ENCODE measurements at regions of chr5 and their contacts with region 1.

Region 1: GRCh38 chr5:111246459-111246858 is 22.3 kb downstream of the CAMK4 start:
- DNase-seq: no peak
- ATAC-seq: no peak
- H3K4me3 ChIP-seq: no peak overlapping the region
- H3K4me3 Mint-ChIP-seq: peak overlapping the region; percentile 3 to 46 (median 21)
- H3K27ac ChIP-seq: no peak overlapping the region
- H3K27ac Mint-ChIP-seq: peak overlapping the region; percentile 53 to 64
- H3K4me1 ChIP-seq: peaks cover 21 to 75% of the 10 kb centered on the region in 2 experiments
- H3K4me1 Mint-ChIP-seq: peaks cover 81 to 85% (median 84%) of the 10 kb centered on the region in 3 donors
- H3K27me3 ChIP-seq: no peaks in the 10 kb centered on the region
- H3K27me3 Mint-ChIP-seq: no peaks in the 10 kb centered on the region

Region 2: DNA sequence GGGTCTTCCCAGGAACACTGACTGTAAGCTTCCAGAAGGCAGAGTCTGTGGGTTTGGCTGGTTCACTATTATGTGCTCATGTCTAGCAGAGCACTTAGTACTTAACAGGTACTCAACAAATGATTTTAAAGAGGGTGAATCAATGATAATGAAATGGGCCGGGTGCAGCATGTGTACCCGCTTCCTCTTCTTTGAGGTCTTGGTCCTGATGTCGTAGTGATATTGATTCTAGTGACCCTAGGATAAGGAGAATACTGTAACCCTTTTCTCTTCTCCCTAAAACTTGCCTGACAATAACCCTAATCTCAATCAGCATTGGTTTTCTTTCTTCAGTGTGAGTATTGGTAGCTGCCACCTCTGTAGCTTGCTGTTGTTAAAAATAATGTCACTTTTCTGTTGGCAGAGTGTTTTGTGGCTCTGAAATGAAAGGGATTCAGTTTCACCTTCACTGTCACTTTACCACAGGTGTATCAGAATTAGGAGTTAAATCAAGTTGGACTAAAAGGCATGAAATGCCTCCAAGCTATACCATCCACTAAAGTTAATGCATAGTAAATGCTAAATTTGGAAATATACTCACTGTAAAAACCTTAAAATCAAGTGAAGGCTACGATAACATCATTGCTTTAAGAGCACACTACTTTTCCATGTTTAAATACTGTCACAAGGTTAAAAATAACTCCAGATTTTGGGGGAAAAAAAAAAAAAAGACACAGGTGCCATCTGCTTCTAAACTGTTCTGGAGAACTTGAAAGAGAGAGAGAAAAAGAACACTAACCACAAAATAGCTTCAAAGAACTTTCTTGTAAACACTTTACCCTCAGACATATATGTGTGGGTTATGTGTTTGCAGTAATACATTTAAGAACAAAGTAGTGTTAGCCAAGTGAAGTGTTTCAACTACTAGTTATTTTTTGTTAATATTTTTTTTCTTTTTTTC is 16.3 kb before region 1 on chr5:
- CTCF ChIA-PET with region 1: interaction called, 7 to 14 read pairs
- POLR2A ChIA-PET with region 1: interaction called, 4 to 9 read pairs
- DNase-seq: peak in 1 of 35 experiments; percentile 73
- ATAC-seq: peak; percentile 25 to 68 (median 48)
- H3K4me3 ChIP-seq: peak overlapping the region; percentile 19 to 66
- H3K4me3 Mint-ChIP-seq: peak overlapping the region; percentile 82 to 98 (median 84)
- H3K27ac ChIP-seq: peak overlapping the region; percentile 78
- H3K27ac Mint-ChIP-seq: peak overlapping the region; percentile 100
- H3K4me1 ChIP-seq: peaks cover 43 to 84% of the 10 kb centered on the region in 2 experiments
- H3K4me1 Mint-ChIP-seq: peaks cover 69 to 91% (median 79%) of the 10 kb centered on the region in 3 donors
- H3K27me3 ChIP-seq: no peaks in the 10 kb centered on the region
- H3K27me3 Mint-ChIP-seq: no peaks in the 10 kb centered on the region